ENCODE measurements at regions of chr16 and their contacts with region 1.

Region 1: GRCh38 chr16:68310761-68311511 is at the starts of genes PRMT7 and SLC7A6OS:
- DNase-seq: peak; percentile 91
- ATAC-seq: peak; percentile 98
- H3K4me3 Mint-ChIP-seq: peak within 1 kb of the TSS; percentile 93
- H3K27ac Mint-ChIP-seq: peak within 1 kb of the TSS; percentile 92
- H3K4me1 Mint-ChIP-seq: peaks cover 46% of the 10 kb centered on the region
- H3K27me3 Mint-ChIP-seq: no peaks in the 10 kb centered on the region
- total RNA-seq, gene PRMT7: 85.7 to 87.3 TPM
- total RNA-seq, gene SLC7A6OS: 38.2 to 44.4 TPM

Region 2: DNA sequence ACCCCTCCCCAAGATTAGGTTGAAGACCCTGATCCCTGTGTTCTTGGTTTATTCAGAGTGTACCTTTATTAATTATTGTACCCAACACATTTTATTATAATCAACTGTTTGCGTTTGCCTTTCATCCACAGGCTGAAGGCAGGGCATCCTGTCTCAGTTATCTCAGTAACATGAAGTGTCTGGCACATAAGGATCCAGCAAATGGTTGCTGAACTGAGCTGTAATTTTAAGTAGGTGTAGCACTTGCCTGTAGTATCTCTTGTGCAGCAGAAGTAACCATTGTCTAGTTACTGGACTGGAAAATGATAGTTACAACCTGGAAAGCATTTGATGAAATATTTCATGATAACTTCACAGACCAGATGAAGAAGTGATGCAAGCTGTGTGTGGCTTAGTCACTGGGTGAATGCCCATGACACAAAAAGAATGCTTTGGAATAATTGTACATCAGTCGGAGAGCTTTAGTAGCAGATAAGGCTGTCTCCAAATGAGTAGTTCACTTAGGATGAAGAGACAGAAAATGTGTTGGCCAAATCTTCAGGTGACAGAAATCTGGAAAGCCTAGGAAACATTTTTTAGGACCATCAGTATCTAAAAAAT is 131.6 kb before region 1 on chr16:
- POLR2A ChIA-PET with region 1: no interaction called
- DNase-seq: no peak
- ATAC-seq: no peak
- H3K4me3 Mint-ChIP-seq: no peak overlapping the region
- H3K27ac Mint-ChIP-seq: no peak overlapping the region
- H3K4me1 Mint-ChIP-seq: peaks cover 5% of the 10 kb centered on the region
- H3K27me3 Mint-ChIP-seq: no peaks in the 10 kb centered on the region

Region 3: DNA sequence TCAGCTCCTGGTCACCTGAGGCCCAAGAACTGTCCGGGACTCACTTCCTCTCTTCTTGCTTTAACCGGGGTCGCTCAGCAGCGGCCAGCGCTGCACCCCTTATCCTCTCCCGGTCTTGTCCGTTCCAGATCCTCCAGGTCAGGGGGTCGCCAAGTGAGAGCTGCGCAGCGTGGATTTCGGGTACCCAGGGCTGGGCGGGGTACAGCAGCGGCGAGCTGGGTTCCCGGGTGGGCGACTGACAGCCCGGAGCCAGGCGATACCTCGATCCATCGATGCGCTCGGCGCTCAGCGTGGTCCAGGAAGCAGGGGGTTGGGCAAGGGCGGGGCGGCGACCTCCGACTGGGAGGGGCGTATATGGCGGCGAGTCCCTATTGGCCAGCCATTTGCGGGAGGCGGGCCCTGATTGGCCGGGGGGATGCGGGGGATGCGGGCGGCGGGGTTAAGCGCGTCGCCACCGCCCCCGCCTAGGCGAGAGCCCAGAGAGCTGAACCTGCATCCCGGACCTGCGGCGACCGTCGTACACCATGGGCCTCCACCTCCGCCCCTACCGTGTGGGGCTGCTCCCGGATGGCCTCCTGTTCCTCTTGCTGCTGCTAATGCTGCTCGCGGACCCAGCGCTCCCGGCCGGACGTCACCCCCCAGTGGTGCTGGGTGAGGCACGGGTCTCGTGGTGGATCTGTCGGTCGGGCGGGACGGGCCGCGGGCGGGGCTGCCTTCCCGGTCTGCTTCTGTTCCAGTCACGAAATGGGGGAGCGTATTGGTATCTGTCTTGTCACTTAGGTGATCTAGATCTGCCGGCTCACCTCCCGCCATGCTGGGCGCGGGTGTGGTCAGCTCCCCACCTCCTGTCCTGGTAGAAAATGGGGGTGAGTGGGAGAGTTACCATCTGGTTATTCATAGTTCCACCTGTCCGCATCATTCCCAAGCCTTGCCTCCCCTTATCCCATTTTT is 65.8 kb before region 1 on chr16 and contains the start of gene PLA2G15:
- POLR2A ChIA-PET with region 1: interaction called, 14 read pairs
- DNase-seq: peak; percentile 96
- ATAC-seq: peak; percentile 96
- H3K4me3 Mint-ChIP-seq: peak within 1 kb of the TSS; percentile 91
- H3K27ac Mint-ChIP-seq: peak within 1 kb of the TSS; percentile 82
- H3K4me1 Mint-ChIP-seq: peaks cover 23% of the 10 kb centered on the region
- H3K27me3 Mint-ChIP-seq: no peaks in the 10 kb centered on the region
- total RNA-seq, gene PLA2G15: 10.8 to 12.5 TPM

Region 4: DNA sequence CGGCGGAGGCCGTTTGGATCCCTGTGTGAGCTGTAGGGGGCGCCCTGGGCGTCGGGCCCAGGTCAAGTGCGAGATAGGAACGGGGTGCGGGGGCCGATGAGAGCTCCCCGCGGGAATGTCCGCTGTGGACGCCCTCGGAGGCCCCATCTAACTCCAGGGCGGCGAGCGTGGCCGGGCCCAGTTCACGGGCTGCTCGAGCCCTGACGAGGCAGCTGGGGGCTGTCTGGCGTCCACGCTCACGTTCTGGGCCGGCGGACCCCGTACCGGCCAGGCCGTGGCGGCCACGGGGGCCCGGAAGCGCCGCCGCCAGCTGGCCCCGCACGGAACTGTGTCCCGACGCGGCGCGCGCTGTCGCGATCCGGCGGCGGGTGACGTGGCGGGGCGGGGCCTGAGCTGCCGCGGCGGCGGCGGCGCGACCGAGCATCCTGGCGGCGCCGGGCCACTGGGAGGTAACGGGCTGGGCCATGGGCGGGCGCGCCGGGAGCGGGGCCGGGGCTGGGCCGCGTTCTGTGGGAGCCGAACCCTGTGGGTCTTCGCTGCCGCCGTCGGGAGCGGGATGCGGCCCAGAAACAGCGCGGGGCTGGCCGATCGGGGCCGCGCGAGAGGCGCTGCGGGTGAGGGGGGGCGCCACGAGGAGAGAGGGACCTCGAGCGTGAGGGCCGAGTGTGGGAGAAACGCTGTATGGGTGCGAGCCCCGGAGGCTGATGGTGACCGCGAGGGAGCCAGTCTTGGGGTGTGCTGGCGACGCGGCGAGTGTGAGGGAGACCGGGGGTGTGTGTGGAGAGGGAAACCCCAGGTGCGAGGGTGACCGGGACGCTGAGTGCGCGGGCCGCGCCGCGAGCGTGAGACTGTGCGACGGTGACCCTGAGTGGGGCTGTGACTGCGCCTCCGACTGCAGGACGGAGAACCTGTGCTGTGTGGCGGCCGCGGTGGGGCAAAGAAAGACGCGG is 46.5 kb before region 1 on chr16 and contains the start of gene SLC7A6:
- POLR2A ChIA-PET with region 1: interaction called, 76 read pairs
- DNase-seq: peak; percentile 92
- ATAC-seq: peak; percentile 71
- H3K4me3 Mint-ChIP-seq: peak within 1 kb of the TSS; percentile 97
- H3K27ac Mint-ChIP-seq: peak within 1 kb of the TSS; percentile 98
- H3K4me1 Mint-ChIP-seq: peaks cover 45% of the 10 kb centered on the region
- H3K27me3 Mint-ChIP-seq: no peaks in the 10 kb centered on the region
- total RNA-seq, gene SLC7A6: 110 to 113 TPM

Region 5: DNA sequence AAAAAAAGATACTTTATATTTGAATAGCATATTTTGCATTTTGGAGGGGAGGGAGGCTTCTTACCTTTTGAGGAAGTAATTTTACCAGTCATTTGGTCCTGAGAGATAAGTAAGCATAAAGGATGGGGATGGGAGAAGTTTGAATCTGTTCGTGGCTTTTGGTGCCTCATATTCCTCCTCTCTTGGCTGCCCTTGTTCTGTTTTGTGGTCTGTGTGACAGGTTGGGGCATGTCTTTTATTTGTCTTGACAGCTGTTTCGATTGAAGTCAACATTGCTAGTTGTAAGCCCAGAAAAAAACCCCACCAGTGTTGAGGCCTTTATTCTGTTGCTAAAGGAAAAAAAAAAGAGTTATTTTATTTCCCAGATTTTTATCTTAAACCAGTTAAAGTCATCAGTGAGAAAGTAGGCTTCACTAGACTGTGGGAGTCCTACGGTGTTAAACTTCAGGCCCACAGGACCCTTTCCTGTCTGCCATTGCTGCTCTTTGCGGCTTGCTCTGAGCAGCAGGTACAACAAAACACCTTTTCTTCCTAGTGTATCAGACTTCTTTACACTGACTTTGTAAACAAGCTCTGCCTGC is 35.2 kb before region 1 on chr16:
- POLR2A ChIA-PET with region 1: interaction called, 14 read pairs
- DNase-seq: no peak
- ATAC-seq: peak; percentile 74
- H3K4me3 Mint-ChIP-seq: peak overlapping the region; percentile 67
- H3K27ac Mint-ChIP-seq: peak overlapping the region; percentile 86
- H3K4me1 Mint-ChIP-seq: peaks cover 50% of the 10 kb centered on the region
- H3K27me3 Mint-ChIP-seq: no peaks in the 10 kb centered on the region

Region 6: DNA sequence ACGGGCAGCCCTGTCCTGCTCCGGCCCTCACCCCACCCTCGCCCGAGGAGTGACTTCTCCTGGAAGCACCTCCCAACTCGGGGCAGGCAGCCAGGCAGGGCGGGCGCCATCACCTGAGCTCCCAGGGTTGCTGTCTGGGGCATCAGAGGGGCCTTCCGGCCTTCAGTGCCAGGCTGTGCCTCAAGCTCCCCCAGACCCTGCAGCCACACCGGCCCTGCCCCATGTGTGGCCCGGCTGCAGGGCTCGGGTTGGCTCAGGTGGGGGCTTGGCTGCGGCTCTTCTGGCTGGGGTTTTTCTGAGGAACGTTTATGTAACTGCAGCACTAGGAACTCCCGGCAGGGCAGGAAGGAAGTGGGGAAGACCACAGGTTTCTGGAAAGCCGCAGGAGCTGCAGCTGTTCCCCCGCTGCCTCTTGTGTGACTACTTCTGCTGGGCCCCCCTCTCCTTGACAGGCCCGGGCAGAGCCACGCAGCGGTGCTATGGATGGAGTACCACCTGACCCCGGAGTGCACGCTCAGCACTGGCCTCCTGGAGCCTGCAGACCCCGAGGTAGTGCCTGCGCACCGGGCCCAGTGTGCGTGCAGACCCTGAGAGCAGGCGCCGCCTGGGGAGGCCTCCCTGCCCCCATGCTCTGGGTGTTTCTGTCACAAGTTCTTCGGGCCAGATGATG is 45.4 kb after region 1 on chr16:
- POLR2A ChIA-PET with region 1: interaction called, 11 read pairs
- DNase-seq: peak; percentile 85
- ATAC-seq: peak; percentile 82
- H3K4me3 Mint-ChIP-seq: peak overlapping the region; percentile 68
- H3K27ac Mint-ChIP-seq: peak overlapping the region; percentile 81
- H3K4me1 Mint-ChIP-seq: peaks cover 34% of the 10 kb centered on the region
- H3K27me3 Mint-ChIP-seq: peaks cover 4% of the 10 kb centered on the region

Region 7: GRCh38 chr16:68417711-68418301 is 106.9 kb after region 1 on chr16:
- POLR2A ChIA-PET with region 1: no interaction called
- DNase-seq: peak; percentile 69
- ATAC-seq: peak; percentile 97
- H3K4me3 Mint-ChIP-seq: peak overlapping the region; percentile 63
- H3K27ac Mint-ChIP-seq: peak overlapping the region; percentile 85
- H3K4me1 Mint-ChIP-seq: peaks cover 32% of the 10 kb centered on the region
- H3K27me3 Mint-ChIP-seq: peaks cover 8% of the 10 kb centered on the region